BJ (cell line): ENCODE measurements at regions of chr20 and their contacts with region 1.

Region 1: GRCh38 chr20:57596998-57597939 is 23.0 kb downstream of the ZBP1 start:
- DNase-seq: no peak
- H3K4me3 ChIP-seq: no peak overlapping the region
- H3K27me3 ChIP-seq: no peaks in the 10 kb centered on the region; the same call in none of the 2 replicates
- CTCF ChIP-seq: peak; percentile 76

Region 2: GRCh38 chr20:57398231-57398821 is 198.9 kb before region 1 on chr20:
- CTCF ChIA-PET with region 1: no interaction called
- POLR2A ChIA-PET with region 1: no interaction called
- DNase-seq: no peak
- H3K4me3 ChIP-seq: no peak overlapping the region
- H3K27me3 ChIP-seq: no peaks in the 10 kb centered on the region
- CTCF ChIP-seq: no peak

Region 3: DNA sequence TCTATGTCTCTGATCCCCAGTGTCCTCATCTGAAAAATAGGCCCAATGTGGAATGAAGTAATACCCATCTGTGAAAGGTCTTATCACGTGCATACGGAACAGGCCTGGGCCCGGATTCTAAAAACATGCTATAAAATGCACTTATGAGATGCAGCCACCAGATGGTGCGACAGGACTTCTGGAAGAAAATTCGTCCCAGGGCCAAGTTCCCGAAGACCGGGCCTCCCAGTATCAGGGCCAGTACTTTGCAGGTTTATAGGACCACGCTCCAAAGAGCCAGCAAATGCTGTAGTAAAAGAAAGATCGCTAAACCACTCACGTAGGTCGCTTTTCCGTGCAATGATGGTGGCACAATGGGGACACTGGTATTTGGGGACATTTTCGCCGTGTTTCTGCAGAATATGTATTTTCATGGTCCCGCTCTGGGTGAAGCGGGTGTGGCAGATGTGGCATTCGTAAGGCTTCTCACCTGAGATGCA is 83.0 kb before region 1 on chr20:
- CTCF ChIA-PET with region 1: interaction called, 222 read pairs
- POLR2A ChIA-PET with region 1: no interaction called
- DNase-seq: no peak
- H3K4me3 ChIP-seq: no peak overlapping the region
- H3K27me3 ChIP-seq: peaks cover 10% of the 10 kb centered on the region
- CTCF ChIP-seq: peak; percentile 79

Region 4: DNA sequence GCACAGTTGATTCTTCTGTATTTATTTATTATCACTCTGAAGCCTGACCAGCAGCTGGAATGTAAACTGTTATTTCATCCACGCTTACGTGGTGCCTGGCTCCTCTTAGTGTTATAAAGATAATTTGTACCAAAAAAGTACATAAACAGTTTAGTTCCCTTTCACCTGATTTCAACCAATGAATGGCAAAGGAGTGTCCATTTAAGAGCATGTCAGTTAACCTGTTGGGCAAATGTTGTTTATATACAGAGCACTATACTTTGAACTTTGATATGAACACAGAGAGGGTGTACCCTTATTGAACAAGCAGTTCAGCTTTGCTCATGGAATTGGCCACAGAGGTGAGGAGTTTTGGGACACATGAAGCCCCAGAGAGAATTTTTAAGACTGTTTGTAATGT is 65.2 kb before region 1 on chr20:
- CTCF ChIA-PET with region 1: interaction called, 11 read pairs
- POLR2A ChIA-PET with region 1: no interaction called
- DNase-seq: no peak
- H3K4me3 ChIP-seq: no peak overlapping the region
- H3K27me3 ChIP-seq: peaks cover 5% of the 10 kb centered on the region
- CTCF ChIP-seq: no peak

Region 5: DNA sequence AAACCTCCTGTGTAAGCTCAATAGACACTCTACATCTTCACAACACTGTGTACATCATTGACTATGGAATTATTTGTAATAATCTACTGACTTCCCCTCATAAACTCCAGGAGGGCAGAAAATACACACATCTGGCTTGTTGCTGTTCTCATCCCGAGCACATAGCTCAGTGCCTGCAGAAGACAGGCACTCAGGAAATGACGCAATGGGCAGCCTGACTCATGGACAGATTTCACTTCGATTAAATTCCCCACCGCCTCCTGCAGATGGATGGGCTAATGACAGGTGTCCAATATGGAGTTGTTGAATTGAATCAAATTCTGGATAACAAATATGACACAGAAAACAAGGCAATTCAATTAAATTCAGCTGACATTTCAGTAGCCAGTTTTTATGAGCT is 622.0 kb after region 1 on chr20:
- CTCF ChIA-PET with region 1: interaction called, 18 read pairs
- POLR2A ChIA-PET with region 1: no interaction called
- DNase-seq: peak; percentile 45
- H3K4me3 ChIP-seq: no peak overlapping the region
- H3K27me3 ChIP-seq: peaks cover 6% of the 10 kb centered on the region
- CTCF ChIP-seq: peak; percentile 14; the same call in 1 of the 2 replicates